ENCODE measurements at regions of chr6 and their contacts with region 1.

Region 1: GRCh38 chr6:25942561-25943147 is 12.2 kb upstream of the SLC17A2 start:
- DNase-seq: peak in 2 of 9 experiments; percentile 53 to 67
- ATAC-seq: peak; percentile 38
- H3K4me3 ChIP-seq: no peak overlapping the region
- H3K4me3 Mint-ChIP-seq: no peak overlapping the region
- H3K27ac ChIP-seq: no peak overlapping the region
- H3K27ac Mint-ChIP-seq: no peak overlapping the region
- H3K4me1 ChIP-seq: no peaks in the 10 kb centered on the region
- H3K4me1 Mint-ChIP-seq: peaks cover 3% of the 10 kb centered on the region
- H3K27me3 ChIP-seq: no peaks in the 10 kb centered on the region
- H3K27me3 Mint-ChIP-seq: peaks cover 4% of the 10 kb centered on the region
- CTCF ChIP-seq: peak; percentile 65

Region 2: GRCh38 chr6:25601800-25602673 is 340.6 kb before region 1 on chr6:
- CTCF ChIA-PET with region 1: no interaction called
- POLR2A ChIA-PET with region 1: no interaction called
- intact Hi-C with region 1: loop called in 1 of 2 experiments (anchors 5 kb)
- DNase-seq: peak in 2 of 9 experiments; percentile 59 to 72
- ATAC-seq: no peak
- H3K4me3 ChIP-seq: no peak overlapping the region
- H3K4me3 Mint-ChIP-seq: no peak overlapping the region
- H3K27ac ChIP-seq: no peak overlapping the region
- H3K27ac Mint-ChIP-seq: no peak overlapping the region
- H3K4me1 ChIP-seq: no peaks in the 10 kb centered on the region
- H3K4me1 Mint-ChIP-seq: peaks cover 3% of the 10 kb centered on the region
- H3K27me3 ChIP-seq: no peaks in the 10 kb centered on the region
- H3K27me3 Mint-ChIP-seq: no peaks in the 10 kb centered on the region
- CTCF ChIP-seq: peak; percentile 81

Region 3: GRCh38 chr6:25866011-25866410 is 76.6 kb before region 1 on chr6:
- CTCF ChIA-PET with region 1: no interaction called
- POLR2A ChIA-PET with region 1: no interaction called
- intact Hi-C with region 1: no loop called
- DNase-seq: peak in 7 of 9 experiments; percentile 5 to 84 (median 47)
- ATAC-seq: peak; percentile 91
- H3K4me3 ChIP-seq: no peak overlapping the region
- H3K4me3 Mint-ChIP-seq: peak overlapping the region; percentile 40
- H3K27ac ChIP-seq: peak overlapping the region in 1 of 2 experiments; percentile 38
- H3K27ac Mint-ChIP-seq: peak overlapping the region; percentile 88
- H3K4me1 ChIP-seq: peaks cover 14% of the 10 kb centered on the region
- H3K4me1 Mint-ChIP-seq: peaks cover 24% of the 10 kb centered on the region
- H3K27me3 ChIP-seq: no peaks in the 10 kb centered on the region
- H3K27me3 Mint-ChIP-seq: no peaks in the 10 kb centered on the region
- CTCF ChIP-seq: no peak

Region 4: DNA sequence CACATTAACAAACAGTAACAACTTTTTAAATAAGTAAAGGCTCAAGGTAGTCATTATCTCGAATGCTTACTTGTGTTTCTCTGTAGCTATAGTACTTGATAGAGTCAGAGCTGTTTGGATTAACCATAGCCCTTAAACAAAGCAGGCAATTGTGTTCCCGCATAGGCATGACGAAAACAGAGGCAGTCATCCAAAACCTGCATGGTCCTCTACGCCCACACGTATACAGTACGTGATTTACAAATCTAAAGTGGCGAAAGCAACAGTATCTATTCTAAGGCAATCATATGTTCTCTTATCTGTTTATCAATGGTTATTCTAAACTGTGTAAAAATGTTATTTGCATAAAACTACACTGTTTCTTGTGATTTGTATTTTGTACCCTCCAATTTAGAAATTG is 176.3 kb after region 1 on chr6:
- CTCF ChIA-PET with region 1: no interaction called
- POLR2A ChIA-PET with region 1: no interaction called
- intact Hi-C with region 1: no loop called
- DNase-seq: no peak
- ATAC-seq: no peak
- H3K4me3 ChIP-seq: no peak overlapping the region
- H3K4me3 Mint-ChIP-seq: no peak overlapping the region
- H3K27ac ChIP-seq: no peak overlapping the region
- H3K27ac Mint-ChIP-seq: no peak overlapping the region
- H3K4me1 ChIP-seq: peaks cover 13% of the 10 kb centered on the region
- H3K4me1 Mint-ChIP-seq: peaks cover 18% of the 10 kb centered on the region
- H3K27me3 ChIP-seq: no peaks in the 10 kb centered on the region
- H3K27me3 Mint-ChIP-seq: no peaks in the 10 kb centered on the region
- CTCF ChIP-seq: no peak

Measured in CD8-positive, alpha-beta T cell (primary cell).